PC-9 (cell line): ENCODE measurements at regions of chr9 and their contacts with region 1.

Region 1: DNA sequence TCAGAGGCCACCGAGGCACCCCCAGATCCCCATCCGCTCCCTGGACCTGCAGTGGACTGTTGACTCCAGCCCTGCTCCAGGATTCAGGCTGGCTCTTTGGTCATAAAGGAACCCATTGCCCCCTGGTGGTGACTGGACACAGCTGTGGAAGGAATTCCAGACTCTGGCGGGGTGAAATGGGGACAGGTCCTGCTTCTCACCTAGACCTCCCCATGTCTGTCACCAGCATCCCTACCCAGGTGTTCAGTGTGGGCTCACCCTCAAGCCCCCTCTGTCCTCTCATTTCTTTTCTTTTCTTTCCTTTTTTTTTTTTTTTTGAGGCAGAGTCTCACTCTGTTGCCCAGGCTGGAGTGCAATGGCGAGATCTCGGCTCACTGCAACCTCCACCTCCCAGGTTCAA is 25.5 kb upstream of the STXBP1 start:
- DNase-seq: peak in 1 of 2 experiments; percentile 82
- H3K4me3 ChIP-seq: no peak overlapping the region
- H3K27ac ChIP-seq: no peak overlapping the region
- H3K4me1 ChIP-seq: peaks cover 23% of the 10 kb centered on the region
- H3K27me3 ChIP-seq: no peaks in the 10 kb centered on the region
- CTCF ChIP-seq: peak; percentile 93

Region 2: DNA sequence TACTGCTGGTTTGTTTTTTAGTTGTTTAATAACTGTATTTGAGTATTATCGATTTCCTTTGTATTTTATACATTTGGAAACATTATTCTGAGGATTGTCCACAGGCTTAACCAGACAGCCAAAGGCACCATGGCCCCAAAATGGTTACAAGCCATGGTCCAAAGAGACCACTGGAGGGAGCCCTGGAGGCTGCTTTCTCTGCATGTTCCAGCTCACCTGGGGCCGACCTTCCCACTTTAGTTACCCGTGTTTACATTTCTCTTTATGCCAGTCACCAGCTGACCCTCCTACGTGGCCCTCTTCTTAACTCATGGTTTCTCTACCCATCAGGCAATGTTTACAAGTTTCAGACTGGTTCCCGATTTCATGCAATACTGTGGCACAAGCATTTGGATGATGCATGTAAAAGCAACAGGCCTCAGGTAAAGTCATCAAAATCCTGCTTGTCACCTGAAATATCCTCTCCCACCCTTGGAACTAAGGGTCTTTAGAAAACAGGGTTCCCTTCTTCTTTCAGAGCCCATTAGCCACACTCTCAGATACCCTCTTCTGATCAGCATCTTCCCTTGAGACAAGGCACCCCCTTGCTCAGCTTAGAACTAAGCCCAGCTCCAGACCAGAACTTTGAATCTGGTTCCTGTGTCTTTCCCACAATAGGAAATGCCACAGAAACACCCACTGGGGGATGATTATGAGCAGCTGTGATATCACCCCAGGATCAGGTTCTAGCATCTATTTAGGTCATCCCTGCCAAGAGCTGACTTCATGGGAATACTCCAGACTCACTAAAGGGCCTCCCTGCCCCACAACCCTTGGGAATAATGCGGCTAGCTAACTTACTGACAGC is 371.9 kb before region 1 on chr9:
- CTCF ChIA-PET with region 1: no interaction called
- POLR2A ChIA-PET with region 1: no interaction called
- intact Hi-C with region 1: loop called (anchors 1 kb)
- DNase-seq: peak; percentile 49 to 75
- H3K4me3 ChIP-seq: no peak overlapping the region
- H3K27ac ChIP-seq: no peak overlapping the region
- H3K4me1 ChIP-seq: 0 out of 2 replicates have a peak, but pooled peaks cover 4% of the 10 kb centered on the region
- H3K27me3 ChIP-seq: no peaks in the 10 kb centered on the region
- CTCF ChIP-seq: peak; percentile 89

Region 3: DNA sequence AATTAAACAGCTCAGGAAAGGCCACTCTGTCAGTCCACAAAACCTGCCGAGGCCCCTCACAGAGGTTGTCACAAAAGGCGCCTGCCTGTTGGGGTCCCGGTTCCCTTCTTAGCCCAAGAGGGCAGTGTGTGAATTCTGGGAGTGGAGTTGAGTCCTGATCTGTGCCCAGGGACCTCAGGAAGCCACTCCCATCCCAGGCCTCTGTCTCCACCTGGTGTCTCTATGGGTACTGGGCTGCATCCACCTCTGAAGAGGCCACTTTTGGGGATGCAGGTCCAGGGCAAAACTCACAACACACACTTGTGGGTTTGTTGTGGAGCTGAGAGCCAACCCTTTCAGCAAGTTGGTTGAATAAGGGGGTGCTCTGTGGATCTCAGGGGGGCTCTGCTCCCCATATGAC is 48.7 kb before region 1 on chr9:
- CTCF ChIA-PET with region 1: interaction called, 4 read pairs
- POLR2A ChIA-PET with region 1: no interaction called
- intact Hi-C with region 1: loop called (anchors 1 kb)
- DNase-seq: no peak
- H3K4me3 ChIP-seq: no peak overlapping the region
- H3K27ac ChIP-seq: 0 out of 2 replicates have a peak overlapping the region, but pooled peaks have one; percentile 12
- H3K4me1 ChIP-seq: peaks cover 22% of the 10 kb centered on the region
- H3K27me3 ChIP-seq: no peaks in the 10 kb centered on the region
- CTCF ChIP-seq: 0 out of 2 replicates have a peak, but pooled peaks have one; percentile 27

Region 4: DNA sequence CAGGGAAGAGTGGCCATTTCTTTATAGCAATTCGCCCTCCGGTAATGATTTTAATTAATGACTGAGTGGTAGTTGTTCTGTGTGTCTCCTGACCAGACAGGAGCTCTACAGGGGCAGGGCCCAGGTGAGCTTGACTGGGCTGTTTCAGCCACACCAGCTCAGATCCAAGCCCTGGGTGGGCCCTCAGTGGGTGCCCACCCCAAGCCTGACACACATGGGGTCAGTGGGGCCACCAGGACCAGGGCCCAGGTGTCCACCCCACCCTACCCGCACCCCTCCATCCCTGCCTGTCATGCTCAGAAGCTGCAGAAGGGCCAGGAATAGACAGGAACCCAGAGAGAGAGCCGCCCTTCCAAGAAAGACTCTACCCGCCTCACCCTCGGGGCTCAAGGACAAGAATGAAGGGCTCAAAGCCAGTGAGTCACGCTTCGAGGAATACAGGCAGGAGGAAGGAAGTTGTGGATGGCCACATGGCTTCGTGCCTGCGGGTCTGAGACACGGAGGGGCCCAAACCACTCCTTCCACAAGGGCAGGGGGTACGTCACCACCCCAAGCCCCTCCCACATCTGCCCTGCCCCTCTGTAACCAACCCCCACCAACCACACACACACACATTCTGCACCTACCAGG is 30.7 kb before region 1 on chr9:
- CTCF ChIA-PET with region 1: interaction called, 5 read pairs
- POLR2A ChIA-PET with region 1: interaction called, 17 read pairs
- intact Hi-C with region 1: no loop called
- DNase-seq: peak; percentile 94
- H3K4me3 ChIP-seq: no peak overlapping the region
- H3K27ac ChIP-seq: peak overlapping the region; percentile 74
- H3K4me1 ChIP-seq: peaks cover 69% of the 10 kb centered on the region
- H3K27me3 ChIP-seq: no peaks in the 10 kb centered on the region
- CTCF ChIP-seq: no peak

Region 5: DNA sequence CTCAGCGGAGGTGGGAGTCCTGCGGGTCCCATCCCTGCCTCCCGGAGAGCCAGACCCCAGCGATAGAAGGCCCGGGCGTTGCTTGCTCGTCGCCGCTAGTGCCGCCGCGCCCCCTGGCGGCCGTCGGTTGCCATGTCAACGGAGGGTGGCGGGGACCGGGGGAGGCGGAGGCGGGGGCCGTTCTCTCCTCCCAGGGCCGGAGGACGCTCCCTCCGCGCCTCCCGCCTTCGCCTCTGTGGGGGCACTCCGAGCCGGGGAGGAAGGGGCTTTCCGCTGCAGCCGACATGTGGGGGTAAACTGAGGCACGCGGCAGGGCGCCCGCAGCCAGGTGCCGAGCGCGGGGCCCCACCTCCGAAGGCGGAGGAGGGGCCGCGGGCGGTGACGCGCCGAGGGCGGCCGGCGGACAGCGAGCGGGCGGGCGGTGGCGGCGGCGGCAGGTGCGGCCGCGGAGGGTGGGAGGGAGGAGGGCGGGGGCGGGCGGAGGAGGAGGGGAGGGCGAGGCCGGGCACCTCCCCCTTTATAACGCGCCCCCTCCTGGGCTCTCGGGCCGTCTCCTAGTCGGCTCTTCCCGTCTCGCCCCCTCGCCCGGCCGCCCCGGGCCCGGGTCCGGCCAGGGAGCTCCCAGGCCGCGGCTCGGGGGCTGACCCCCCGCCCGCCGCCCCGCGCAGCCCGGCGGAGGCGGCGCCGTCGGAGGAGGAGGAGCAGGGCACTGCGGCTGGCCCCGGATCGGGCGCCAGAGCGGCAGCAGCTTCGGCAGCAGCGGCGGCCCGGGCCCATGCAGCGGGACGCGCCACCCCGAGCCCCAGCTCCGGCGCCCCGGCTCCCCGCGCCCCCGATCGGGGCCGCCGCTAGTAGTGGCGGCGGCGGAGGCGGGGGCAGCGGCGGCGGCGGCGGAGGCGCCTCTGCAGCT is 198.7 kb after region 1 on chr9:
- CTCF ChIA-PET with region 1: no interaction called
- POLR2A ChIA-PET with region 1: no interaction called
- intact Hi-C with region 1: loop called (anchors 2 kb)
- DNase-seq: peak; percentile 47 to 91
- H3K4me3 ChIP-seq: peak overlapping the region; percentile 99
- H3K27ac ChIP-seq: no peak overlapping the region
- H3K4me1 ChIP-seq: peaks cover 8% of the 10 kb centered on the region
- H3K27me3 ChIP-seq: no peaks in the 10 kb centered on the region
- CTCF ChIP-seq: peak; percentile 94

Region 6: GRCh38 chr9:128420060-128420650 is 833.6 kb after region 1 on chr9:
- CTCF ChIA-PET with region 1: no interaction called
- POLR2A ChIA-PET with region 1: no interaction called
- intact Hi-C with region 1: no loop called
- DNase-seq: peak; percentile 47 to 82
- H3K4me3 ChIP-seq: peak overlapping the region; percentile 95
- H3K27ac ChIP-seq: no peak overlapping the region
- H3K4me1 ChIP-seq: peaks cover 26% of the 10 kb centered on the region
- H3K27me3 ChIP-seq: no peaks in the 10 kb centered on the region
- CTCF ChIP-seq: peak; percentile 85